B cell (primary cell): ENCODE measurements at regions of chr2 and their contacts with region 1.

Region 1: GRCh38 chr2:20438334-20439192 is 8.3 kb upstream of the RHOB start:
- DNase-seq: no peak
- ATAC-seq: no peak
- H3K4me3 ChIP-seq: no peak overlapping the region
- H3K4me3 Mint-ChIP-seq: no peak overlapping the region
- H3K27ac ChIP-seq: no peak overlapping the region
- H3K27ac Mint-ChIP-seq: no peak overlapping the region
- H3K4me1 ChIP-seq: no peaks in the 10 kb centered on the region
- H3K4me1 Mint-ChIP-seq: no peaks in the 10 kb centered on the region
- H3K27me3 ChIP-seq: peaks cover 0 to 8% (median 0%) of the 10 kb centered on the region in 4 experiments
- H3K27me3 Mint-ChIP-seq: peaks cover 22% of the 10 kb centered on the region
- CTCF ChIP-seq: no peak

Region 2: DNA sequence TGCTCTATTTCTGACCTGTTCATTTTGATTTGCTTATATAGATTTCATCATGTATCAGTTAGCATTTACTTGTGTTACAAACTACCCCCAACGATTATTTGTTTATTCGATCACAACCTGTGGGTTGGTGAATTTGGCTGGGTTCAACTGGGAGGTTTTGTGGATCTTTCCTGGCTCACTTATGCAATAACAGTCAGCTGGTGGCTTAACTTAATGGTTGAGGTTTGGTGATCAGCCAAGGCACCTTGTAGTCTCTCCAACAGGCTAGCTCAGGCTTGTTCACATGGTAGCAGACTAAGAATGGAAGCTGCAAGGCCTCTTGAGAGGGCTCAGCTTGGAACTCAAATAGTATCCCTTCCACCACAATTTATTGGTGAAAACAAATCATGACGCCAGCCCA is 82.5 kb before region 1 on chr2:
- CTCF ChIA-PET with region 1: no interaction called
- POLR2A ChIA-PET with region 1: no interaction called
- intact Hi-C with region 1: no loop called
- DNase-seq: no peak
- ATAC-seq: no peak
- H3K4me3 ChIP-seq: no peak overlapping the region
- H3K4me3 Mint-ChIP-seq: no peak overlapping the region
- H3K27ac ChIP-seq: no peak overlapping the region
- H3K27ac Mint-ChIP-seq: no peak overlapping the region
- H3K4me1 ChIP-seq: peaks cover 12 to 13% of the 10 kb centered on the region in 2 donors
- H3K4me1 Mint-ChIP-seq: no peaks in the 10 kb centered on the region
- H3K27me3 ChIP-seq: no peaks in the 10 kb centered on the region
- H3K27me3 Mint-ChIP-seq: no peaks in the 10 kb centered on the region
- CTCF ChIP-seq: no peak

Region 3: GRCh38 chr2:20424300-20425290 is 14.0 kb before region 1 on chr2:
- CTCF ChIA-PET with region 1: interaction called, 11 read pairs
- POLR2A ChIA-PET with region 1: interaction called, 12 read pairs
- intact Hi-C with region 1: no loop called
- DNase-seq: no peak
- ATAC-seq: peak; percentile 50
- H3K4me3 ChIP-seq: peak overlapping the region; percentile 5 to 52 (median 27)
- H3K4me3 Mint-ChIP-seq: peak overlapping the region; percentile 80
- H3K27ac ChIP-seq: peak overlapping the region; percentile 85 to 88
- H3K27ac Mint-ChIP-seq: peak overlapping the region; percentile 93
- H3K4me1 ChIP-seq: peaks cover 46 to 64% of the 10 kb centered on the region in 2 donors
- H3K4me1 Mint-ChIP-seq: peaks cover 49% of the 10 kb centered on the region
- H3K27me3 ChIP-seq: no peaks in the 10 kb centered on the region
- H3K27me3 Mint-ChIP-seq: no peaks in the 10 kb centered on the region
- CTCF ChIP-seq: no peak

Region 4: DNA sequence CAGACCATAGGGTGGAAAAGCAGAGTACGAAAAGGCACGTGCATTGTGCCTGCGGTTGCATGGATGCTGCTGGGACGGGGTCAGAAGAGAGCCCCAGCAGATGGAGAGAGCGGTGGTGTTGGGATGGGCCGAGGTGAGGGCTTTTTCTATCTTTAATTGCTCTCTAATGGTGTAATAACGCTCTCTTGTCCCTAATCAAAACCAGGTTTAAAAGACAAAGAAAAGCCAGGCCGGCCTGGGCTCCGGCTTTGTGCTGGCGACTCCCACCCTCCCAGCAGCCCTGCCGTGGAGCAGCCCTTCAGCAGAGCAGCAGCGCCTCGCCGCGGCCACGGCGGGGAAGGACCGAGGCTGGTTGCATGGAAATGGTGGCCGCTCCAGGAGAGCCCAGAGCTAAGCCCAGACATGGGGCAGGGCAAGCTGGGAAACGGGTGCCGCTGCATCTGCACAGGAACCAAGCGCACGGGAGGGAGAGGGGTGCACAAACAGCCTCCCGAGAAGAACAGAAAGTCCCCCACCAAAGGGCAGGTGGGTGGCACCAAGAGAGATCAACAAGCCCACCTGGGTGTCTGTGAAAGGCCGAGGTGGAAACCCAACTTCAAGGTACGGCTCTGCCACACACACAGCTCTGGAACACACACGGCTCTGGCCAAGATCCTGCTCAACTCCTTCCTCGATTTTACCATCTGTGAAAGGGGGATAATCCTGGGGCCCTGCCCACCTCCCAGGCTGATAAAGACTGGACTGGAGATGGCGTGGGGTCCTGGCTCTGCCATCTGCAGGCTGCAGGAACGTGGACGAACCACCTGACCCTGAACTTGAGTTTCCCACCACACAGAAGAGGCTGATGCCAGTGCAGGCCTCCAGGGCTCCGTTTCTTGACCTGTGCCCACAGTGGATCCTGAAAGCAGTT is 197.4 kb after region 1 on chr2:
- CTCF ChIA-PET with region 1: interaction called, 114 read pairs
- POLR2A ChIA-PET with region 1: no interaction called
- intact Hi-C with region 1: loop called (anchors 1 kb)
- DNase-seq: peak; percentile 68
- ATAC-seq: peak; percentile 86
- H3K4me3 ChIP-seq: no peak overlapping the region
- H3K4me3 Mint-ChIP-seq: no peak overlapping the region
- H3K27ac ChIP-seq: no peak overlapping the region
- H3K27ac Mint-ChIP-seq: no peak overlapping the region
- H3K4me1 ChIP-seq: peaks cover 0 to 2% of the 10 kb centered on the region in 2 donors
- H3K4me1 Mint-ChIP-seq: peaks cover 11% of the 10 kb centered on the region
- H3K27me3 ChIP-seq: no peaks in the 10 kb centered on the region
- H3K27me3 Mint-ChIP-seq: no peaks in the 10 kb centered on the region
- CTCF ChIP-seq: peak; percentile 77

Region 5: GRCh38 chr2:20698916-20699613 is 260.5 kb after region 1 on chr2:
- CTCF ChIA-PET with region 1: no interaction called
- POLR2A ChIA-PET with region 1: no interaction called
- intact Hi-C with region 1: no loop called
- DNase-seq: peak; percentile 30
- ATAC-seq: no peak
- H3K4me3 ChIP-seq: peak overlapping the region in 1 of 5 experiments; percentile 12
- H3K4me3 Mint-ChIP-seq: peak overlapping the region; percentile 66
- H3K27ac ChIP-seq: peak overlapping the region in 1 of 2 donors; percentile 1
- H3K27ac Mint-ChIP-seq: peak overlapping the region; percentile 27
- H3K4me1 ChIP-seq: peaks cover 13 to 31% of the 10 kb centered on the region in 2 donors
- H3K4me1 Mint-ChIP-seq: peaks cover 32% of the 10 kb centered on the region
- H3K27me3 ChIP-seq: no peaks in the 10 kb centered on the region
- H3K27me3 Mint-ChIP-seq: no peaks in the 10 kb centered on the region
- CTCF ChIP-seq: no peak